ENCODE measurements at regions of chr18 and their contacts with region 1.

Region 1: GRCh38 chr18:25181993-25182392 is 170.0 kb downstream of the ZNF521 start:
- DNase-seq: no peak
- H3K4me3 ChIP-seq: no peak overlapping the region
- H3K27ac ChIP-seq: no peak overlapping the region
- H3K4me1 ChIP-seq: no peaks in the 10 kb centered on the region
- H3K27me3 ChIP-seq: no peaks in the 10 kb centered on the region
- CTCF ChIP-seq: no peak

Region 2: GRCh38 chr18:25144820-25145219 is 37.2 kb before region 1 on chr18:
- intact Hi-C with region 1: loop called (anchors 1 kb)
- DNase-seq: no peak
- H3K4me3 ChIP-seq: no peak overlapping the region
- H3K27ac ChIP-seq: no peak overlapping the region
- H3K4me1 ChIP-seq: no peaks in the 10 kb centered on the region
- H3K27me3 ChIP-seq: no peaks in the 10 kb centered on the region
- CTCF ChIP-seq: no peak

Region 3: GRCh38 chr18:25230658-25231326 is 48.8 kb after region 1 on chr18:
- intact Hi-C with region 1: no loop called
- DNase-seq: peak; percentile 17 to 91
- H3K4me3 ChIP-seq: peak overlapping the region in 1 of 2 donors; percentile 43
- H3K27ac ChIP-seq: peak overlapping the region; percentile 68 to 80
- H3K4me1 ChIP-seq: peaks cover 0 to 21% of the 10 kb centered on the region in 2 donors
- H3K27me3 ChIP-seq: no peaks in the 10 kb centered on the region
- CTCF ChIP-seq: no peak

Measured in ascending aorta (tissue), 2 donors.